Activated CD4-positive, alpha-beta T cell treated with anti-CD3 and anti-CD28 coated beads, Interleukin-2, amount 10 ng/mL, durations not matched to agents 24 days and 14 days (primary cell): ENCODE measurements at regions of chr17 and their contacts with region 1.

Region 1: GRCh38 chr17:3738562-3739295 is 15.0 kb downstream of the HASPIN start:
- DNase-seq: peak; percentile 85
- H3K4me3 Mint-ChIP-seq: peak overlapping the region; percentile 24
- H3K27ac Mint-ChIP-seq: peak overlapping the region; percentile 64
- H3K4me1 Mint-ChIP-seq: peaks cover 35% of the 10 kb centered on the region
- H3K27me3 Mint-ChIP-seq: no peaks in the 10 kb centered on the region

Region 2: DNA sequence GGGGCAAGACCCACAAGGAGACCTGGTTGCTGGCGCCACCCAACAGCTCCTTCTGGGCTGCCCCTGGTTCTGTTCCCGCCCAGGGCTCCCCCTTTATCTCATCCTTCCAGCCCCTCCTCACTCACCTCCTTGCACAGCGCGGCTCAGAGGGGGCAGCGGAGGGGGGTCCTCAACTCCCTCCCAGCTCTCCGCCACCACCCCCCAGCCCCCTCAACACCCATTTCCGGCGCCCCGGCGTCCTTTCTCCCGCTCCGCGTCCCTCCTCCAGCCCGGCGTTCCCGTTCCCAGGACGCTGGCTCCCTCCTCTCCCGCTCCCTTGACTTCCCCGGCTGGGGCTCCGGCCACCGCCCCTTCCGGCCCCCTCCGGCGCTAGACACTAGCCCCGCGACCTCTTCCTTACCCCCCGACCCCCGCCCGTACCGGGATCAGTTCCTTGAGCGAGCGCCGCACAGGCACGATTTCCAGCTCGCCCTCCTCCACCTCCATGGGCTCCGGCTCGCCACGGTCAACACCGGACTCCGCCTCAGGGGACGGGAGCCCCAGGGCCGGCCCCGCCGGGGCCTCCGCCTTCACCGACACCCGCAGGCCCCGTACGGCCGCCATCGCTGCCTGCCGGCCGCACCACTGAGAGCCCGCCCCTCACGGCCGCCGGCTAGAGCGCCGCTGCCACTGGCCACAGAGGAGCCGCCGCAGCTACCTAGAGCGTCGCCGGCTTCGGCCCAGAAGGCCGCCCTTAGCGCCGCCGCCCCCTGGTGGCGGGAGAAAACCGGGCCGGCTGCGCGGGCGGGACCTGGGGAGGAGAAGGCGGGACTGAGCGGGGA is 107.1 kb after region 1 on chr17 and contains the start of gene NCBP3:
- intact Hi-C with region 1: loop called (anchors 1 kb)
- DNase-seq: peak; percentile 98
- H3K4me3 Mint-ChIP-seq: peak within 1 kb of the TSS; percentile 97
- H3K27ac Mint-ChIP-seq: peak within 1 kb of the TSS; percentile 94
- H3K4me1 Mint-ChIP-seq: peaks cover 22% of the 10 kb centered on the region
- H3K27me3 Mint-ChIP-seq: peaks cover 17% of the 10 kb centered on the region
- total RNA-seq, gene NCBP3: 45.9 and 52.1 TPM in 2 replicates